ENCODE measurements at regions of chr17 and their contacts with region 1.

Region 1: DNA sequence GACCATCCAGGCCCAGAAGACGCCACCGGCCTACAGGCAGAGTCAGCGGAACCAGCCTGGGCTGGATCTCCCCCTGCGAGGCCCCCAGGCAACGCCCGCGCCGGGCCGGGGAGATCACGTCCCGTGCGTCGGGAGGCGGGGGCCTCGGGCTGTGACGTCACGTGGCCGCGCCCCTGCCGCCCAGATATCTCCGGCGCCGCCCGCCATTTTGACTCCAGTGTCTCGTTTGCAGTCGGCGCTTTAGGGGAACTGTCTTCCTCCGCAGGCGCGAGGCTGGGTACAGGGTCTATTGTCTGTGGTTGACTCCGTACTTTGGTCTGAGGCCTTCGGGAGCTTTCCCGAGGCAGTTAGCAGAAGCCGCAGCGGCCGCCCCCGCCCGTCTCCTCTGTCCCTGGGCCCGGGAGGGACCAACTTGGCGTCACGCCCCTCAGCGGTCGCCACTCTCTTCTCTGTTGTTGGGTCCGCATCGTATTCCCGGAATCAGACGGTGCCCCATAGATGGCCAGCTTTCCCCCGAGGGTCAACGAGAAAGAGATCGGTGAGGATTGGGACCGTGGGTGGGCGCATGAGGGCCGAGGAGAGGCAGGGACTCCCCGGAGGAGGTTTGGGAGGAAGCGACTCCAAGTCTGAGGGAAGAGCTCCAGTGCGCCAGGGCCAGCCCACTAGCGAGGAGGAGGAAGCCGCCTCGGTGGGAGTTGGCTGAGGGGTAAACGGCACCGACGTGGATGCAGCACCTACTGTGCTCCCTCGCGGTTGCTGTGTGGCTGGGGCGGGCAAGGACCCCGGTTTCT is at the start of gene WSB1:
- DNase-seq: peak; percentile 99
- H3K4me3 ChIP-seq: peak within 1 kb of the TSS; percentile 67 to 97 (median 76)
- H3K27ac ChIP-seq: peak within 1 kb of the TSS; percentile 99 to 100 (median 100)
- H3K4me1 ChIP-seq: peaks cover 24 to 54% (median 46%) of the 10 kb centered on the region in 6 donors
- H3K27me3 ChIP-seq: no peaks in the 10 kb centered on the region
- CTCF ChIP-seq: peak in 3 of 11 experiments; percentile 8 to 34 (median 30)
- POLR2A ChIP-seq: peak; percentile 97 to 98 (median 98)
- total RNA-seq, gene WSB1: 356 to 641 (median 467) TPM

Region 2: DNA sequence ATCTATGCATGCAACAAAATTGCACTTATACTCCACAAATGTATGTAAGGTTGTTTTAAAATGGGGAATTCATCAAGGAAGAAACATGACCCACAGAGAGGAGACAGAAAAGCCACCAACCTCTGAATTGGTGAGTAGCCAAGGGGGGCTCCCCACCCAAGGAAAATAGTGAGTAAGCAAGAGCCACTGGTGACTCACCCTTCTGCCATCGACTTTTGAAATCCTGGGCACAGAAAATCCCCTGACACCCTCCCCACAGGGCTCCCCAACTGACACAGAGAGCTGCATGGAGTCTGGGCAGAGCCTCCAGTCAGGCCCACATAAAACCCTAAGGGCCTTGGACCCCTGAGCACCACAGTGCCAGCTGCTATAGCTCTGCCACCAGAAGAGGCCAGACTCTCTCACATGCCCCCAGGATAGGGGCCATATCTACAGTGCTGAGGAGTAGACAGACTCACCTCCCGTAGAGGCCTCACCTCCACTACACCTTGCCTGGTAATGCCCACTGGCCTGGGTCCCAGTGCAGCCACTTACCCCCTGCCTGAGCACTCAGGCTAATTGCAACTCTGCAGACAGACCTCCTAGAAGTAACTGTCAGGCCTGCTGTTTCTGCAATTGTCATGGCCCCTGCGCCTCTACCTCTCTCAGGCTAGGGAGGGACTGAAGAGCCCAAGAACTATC is 244.8 kb before region 1 on chr17:
- intact Hi-C with region 1: no loop called
- DNase-seq: no peak
- H3K4me3 ChIP-seq: no peak overlapping the region
- H3K27ac ChIP-seq: no peak overlapping the region
- H3K4me1 ChIP-seq: no peaks in the 10 kb centered on the region
- H3K27me3 ChIP-seq: peaks cover 0 to 28% (median 0%) of the 10 kb centered on the region in 7 donors
- CTCF ChIP-seq: no peak
- POLR2A ChIP-seq: no peak

Region 3: GRCh38 chr17:27245230-27245696 is 48.8 kb before region 1 on chr17:
- intact Hi-C with region 1: loop called (anchors 5 kb)
- DNase-seq: peak; percentile 94
- H3K4me3 ChIP-seq: peak overlapping the region in 2 of 8 donors; percentile 9 to 49
- H3K27ac ChIP-seq: peak overlapping the region; percentile 5 to 97 (median 91)
- H3K4me1 ChIP-seq: peaks cover 3 to 82% (median 48%) of the 10 kb centered on the region in 6 donors
- H3K27me3 ChIP-seq: no peaks in the 10 kb centered on the region
- CTCF ChIP-seq: peak; percentile 45 to 90 (median 76)
- POLR2A ChIP-seq: no peak

Region 4: DNA sequence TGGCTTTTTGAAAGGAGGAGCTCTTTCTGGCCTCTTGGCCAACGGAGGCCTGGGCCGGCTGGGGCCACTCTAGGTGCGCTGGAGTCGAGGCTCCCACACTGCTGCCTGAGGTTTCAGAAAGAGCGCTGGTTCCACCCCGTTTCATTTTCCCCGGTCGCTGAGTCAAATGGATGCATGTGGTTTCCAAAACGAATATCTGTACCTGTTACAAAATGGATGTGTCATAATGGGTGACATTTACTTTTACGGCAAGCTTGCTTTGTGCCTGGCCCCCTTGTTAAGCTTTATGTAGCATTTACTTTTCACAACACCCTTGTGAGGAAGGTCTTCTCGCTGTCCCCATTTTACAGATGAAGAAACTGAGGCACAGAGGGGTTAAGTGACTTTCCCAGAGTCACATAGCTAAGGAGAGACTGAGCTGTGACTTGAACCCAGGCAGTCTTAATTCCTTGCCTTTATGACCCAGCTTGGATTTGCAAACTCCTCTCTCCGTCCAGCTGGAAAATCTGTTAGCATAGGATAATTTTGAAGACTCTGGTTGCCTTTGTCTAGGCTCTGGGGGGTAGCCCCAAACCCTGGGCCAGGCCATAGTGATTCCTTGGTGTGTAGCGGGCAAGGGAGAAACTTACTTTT is 172.8 kb after region 1 on chr17:
- intact Hi-C with region 1: no loop called
- DNase-seq: no peak
- H3K4me3 ChIP-seq: peak overlapping the region in 1 of 8 donors; percentile 23
- H3K27ac ChIP-seq: peak overlapping the region in 6 of 8 donors; percentile 13 to 71 (median 54)
- H3K4me1 ChIP-seq: peaks cover 9 to 71% (median 48%) of the 10 kb centered on the region in 6 donors
- H3K27me3 ChIP-seq: no peaks in the 10 kb centered on the region
- CTCF ChIP-seq: no peak
- POLR2A ChIP-seq: no peak

Measured in spleen (tissue), 13 donors.